ENCODE measurements at regions of chr16 and their contacts with region 1.

Region 1: GRCh38 chr16:47136101-47136820 is 7.5 kb downstream of the NETO2 start:
- DNase-seq: no peak
- H3K4me3 ChIP-seq: no peak overlapping the region
- H3K27ac ChIP-seq: no peak overlapping the region
- H3K4me1 ChIP-seq: no peaks in the 10 kb centered on the region
- H3K27me3 ChIP-seq: no peaks in the 10 kb centered on the region
- CTCF ChIP-seq: no peak

Region 2: GRCh38 chr16:47058295-47059086 is 77.8 kb before region 1 on chr16:
- intact Hi-C with region 1: no loop called
- DNase-seq: peak; percentile 80
- H3K4me3 ChIP-seq: no peak overlapping the region
- H3K27ac ChIP-seq: peak overlapping the region; percentile 8
- H3K4me1 ChIP-seq: no peaks in the 10 kb centered on the region
- H3K27me3 ChIP-seq: no peaks in the 10 kb centered on the region
- CTCF ChIP-seq: no peak

Region 3: GRCh38 chr16:47392081-47392480 is 255.8 kb after region 1 on chr16:
- intact Hi-C with region 1: no loop called
- DNase-seq: no peak
- H3K4me3 ChIP-seq: no peak overlapping the region
- H3K27ac ChIP-seq: no peak overlapping the region
- H3K4me1 ChIP-seq: no peaks in the 10 kb centered on the region
- H3K27me3 ChIP-seq: no peaks in the 10 kb centered on the region
- CTCF ChIP-seq: no peak

Region 4: DNA sequence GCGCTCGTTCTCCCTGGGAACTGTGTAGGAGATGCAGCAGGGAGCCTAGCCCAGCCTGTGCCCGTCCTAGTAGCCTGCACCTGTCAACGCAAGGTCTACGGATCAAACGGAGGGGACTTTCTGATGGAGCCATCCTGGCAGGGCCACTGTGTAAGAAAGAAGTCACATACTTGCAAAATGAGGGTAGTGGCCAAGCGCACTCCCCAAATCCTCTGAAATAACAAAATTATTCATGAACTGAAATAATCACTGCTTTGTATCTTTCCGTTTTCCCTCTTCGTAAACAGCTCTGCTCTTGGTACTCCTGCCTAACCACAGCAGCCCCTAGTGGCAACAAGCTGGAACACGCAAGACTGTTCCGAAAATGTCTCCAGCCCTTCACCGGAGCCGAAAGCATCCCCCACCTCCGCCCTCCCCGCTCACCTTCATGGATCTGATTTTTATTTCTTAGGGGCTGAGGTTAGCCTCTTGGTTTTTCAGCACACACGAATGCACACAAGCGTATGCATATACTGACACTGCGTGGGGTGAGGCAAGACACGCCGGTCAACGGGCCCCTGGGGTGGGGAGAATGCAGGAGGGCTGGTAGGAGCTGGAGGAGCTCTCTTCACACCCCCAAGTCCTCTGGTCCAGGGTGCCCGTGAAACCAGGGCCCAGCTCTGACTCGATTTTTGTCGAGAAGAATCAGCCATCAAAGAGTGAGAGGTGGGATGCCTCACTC is 918.8 kb after region 1 on chr16:
- intact Hi-C with region 1: loop called (anchors 10 kb)
- DNase-seq: peak; percentile 28
- H3K4me3 ChIP-seq: no peak overlapping the region
- H3K27ac ChIP-seq: no peak overlapping the region
- H3K4me1 ChIP-seq: no peaks in the 10 kb centered on the region
- H3K27me3 ChIP-seq: no peaks in the 10 kb centered on the region
- CTCF ChIP-seq: peak; percentile 57